Activated CD8-positive, alpha-beta memory T cell treated with anti-CD3 and anti-CD28 coated beads, Interleukin-2, amount 10 ng/mL, durations not matched to agents 7 days and 5 days (primary cell): ENCODE measurements at regions of chr10 and their contacts with region 1.

Region 1: DNA sequence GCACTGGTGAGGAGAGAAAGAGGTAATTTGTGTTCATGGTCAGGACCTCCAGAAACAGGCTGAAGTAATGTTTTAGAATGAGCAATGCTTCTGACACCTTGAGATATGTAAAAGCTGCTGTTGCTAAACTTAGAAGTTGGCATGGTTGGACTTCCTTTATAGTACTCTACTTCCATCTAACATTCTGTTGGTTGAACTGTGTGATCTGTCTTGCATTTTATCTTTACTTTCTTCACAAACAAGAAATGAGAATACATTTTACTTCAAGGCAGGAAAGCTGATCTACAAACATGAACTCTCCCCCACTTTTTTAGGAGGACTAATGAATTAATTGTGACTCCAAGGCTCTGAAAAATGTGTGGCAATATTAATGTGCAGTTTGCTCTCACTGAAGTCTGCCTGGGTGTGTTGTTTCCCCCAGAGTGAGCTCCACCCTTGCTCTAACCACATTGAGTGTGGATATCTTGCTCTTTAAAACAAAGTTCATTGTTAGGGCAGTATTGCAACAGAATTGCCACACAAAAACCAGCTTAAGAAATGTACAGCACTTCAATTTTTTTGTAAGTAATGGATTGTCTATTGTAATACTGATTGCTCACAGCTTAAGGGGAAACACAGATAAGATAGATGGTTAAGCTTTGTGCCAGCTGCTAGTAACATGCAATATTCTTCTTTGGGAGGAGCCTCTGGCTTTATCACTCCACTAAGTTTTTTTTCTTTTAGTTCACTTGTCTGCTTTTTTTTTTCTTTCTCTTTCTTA is 69.0 kb downstream of the ADD3 start:
- DNase-seq: peak; percentile 65
- ATAC-seq: peak; percentile 75
- H3K4me3 Mint-ChIP-seq: peak overlapping the region; percentile 79
- H3K27ac Mint-ChIP-seq: peak overlapping the region; percentile 94
- H3K4me1 Mint-ChIP-seq: peaks cover 78% of the 10 kb centered on the region
- H3K27me3 Mint-ChIP-seq: no peaks in the 10 kb centered on the region

Region 2: DNA sequence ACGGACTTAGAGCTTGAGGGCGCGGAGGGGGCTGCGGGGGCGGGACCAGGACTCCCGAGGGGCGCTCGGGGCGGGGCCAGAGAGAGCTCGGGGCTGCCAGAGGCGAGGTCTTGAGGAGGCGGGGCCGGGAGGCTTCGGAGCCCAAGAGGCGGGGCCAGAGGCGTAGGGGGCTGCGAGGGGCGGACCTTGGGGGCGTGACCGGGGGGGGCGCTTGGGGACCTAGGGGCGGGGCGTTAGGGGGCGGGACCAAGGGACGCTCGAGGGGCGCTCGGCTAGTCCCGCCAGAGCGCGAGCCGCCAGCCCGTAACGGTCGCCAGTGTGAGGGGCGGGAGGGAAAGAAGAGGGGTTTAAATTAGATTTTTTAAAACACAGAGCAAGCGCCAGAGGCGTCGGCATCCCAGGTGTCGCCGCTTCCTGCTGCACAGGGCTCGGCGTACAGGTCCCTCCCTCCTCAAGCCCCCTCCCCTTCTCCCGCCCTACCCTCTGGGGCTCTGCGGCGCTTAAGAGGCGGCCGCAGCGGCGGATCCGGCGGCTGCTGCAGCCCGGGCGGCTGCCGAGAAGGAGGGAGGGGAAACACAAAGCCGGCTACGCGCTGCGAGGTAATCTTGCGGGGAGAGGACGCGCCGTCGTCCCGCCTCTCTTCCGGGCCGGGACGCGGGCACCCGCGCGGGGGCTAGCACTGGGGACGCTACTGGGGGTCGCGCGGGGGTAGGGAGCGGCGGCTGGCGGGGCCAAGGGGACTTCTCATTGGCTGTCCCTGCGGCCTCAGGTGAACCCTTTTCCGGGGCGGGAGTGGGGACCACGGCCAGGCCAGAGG is 68.8 kb before region 1 on chr10 and contains the start of gene ADD3:
- CTCF ChIA-PET with region 1: interaction called, 32 read pairs
- DNase-seq: peak; percentile 95
- ATAC-seq: peak; percentile 78
- H3K4me3 Mint-ChIP-seq: no peak within 1 kb of the TSS
- H3K27ac Mint-ChIP-seq: peak within 1 kb of the TSS; percentile 89
- H3K4me1 Mint-ChIP-seq: peaks cover 34% of the 10 kb centered on the region
- H3K27me3 Mint-ChIP-seq: no peaks in the 10 kb centered on the region
- total RNA-seq, gene ADD3: 124 to 206 TPM

Region 3: DNA sequence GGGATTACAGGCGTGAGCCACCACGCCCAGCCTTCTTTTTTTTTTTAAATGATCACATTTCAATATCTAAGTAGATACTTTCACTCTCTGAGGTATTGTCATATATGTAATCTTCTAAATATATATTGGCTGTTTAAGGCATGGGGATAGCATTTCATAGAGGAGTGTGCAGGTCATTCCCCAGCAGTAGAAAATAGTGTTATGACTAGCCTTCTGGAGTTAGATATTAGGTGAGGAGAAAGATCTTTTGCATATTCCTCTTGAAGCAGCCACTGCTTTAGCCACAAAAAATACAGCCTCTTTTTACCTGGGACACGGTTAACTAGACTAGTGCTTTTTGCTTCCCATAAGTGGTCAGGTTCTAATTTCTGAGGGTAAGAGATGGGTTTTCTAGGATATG is 40.1 kb before region 1 on chr10:
- CTCF ChIA-PET with region 1: no interaction called
- DNase-seq: no peak
- ATAC-seq: no peak
- H3K4me3 Mint-ChIP-seq: no peak overlapping the region
- H3K27ac Mint-ChIP-seq: no peak overlapping the region
- H3K4me1 Mint-ChIP-seq: peaks cover 39% of the 10 kb centered on the region
- H3K27me3 Mint-ChIP-seq: no peaks in the 10 kb centered on the region

Region 4: GRCh38 chr10:110101464-110102144 is 24.9 kb after region 1 on chr10:
- CTCF ChIA-PET with region 1: no interaction called
- DNase-seq: no peak
- ATAC-seq: no peak
- H3K4me3 Mint-ChIP-seq: no peak overlapping the region
- H3K27ac Mint-ChIP-seq: no peak overlapping the region
- H3K4me1 Mint-ChIP-seq: peaks cover 23% of the 10 kb centered on the region
- H3K27me3 Mint-ChIP-seq: no peaks in the 10 kb centered on the region